HCT116 (cell line): ENCODE measurements at regions of chr5 and their contacts with region 1.

Region 1: DNA sequence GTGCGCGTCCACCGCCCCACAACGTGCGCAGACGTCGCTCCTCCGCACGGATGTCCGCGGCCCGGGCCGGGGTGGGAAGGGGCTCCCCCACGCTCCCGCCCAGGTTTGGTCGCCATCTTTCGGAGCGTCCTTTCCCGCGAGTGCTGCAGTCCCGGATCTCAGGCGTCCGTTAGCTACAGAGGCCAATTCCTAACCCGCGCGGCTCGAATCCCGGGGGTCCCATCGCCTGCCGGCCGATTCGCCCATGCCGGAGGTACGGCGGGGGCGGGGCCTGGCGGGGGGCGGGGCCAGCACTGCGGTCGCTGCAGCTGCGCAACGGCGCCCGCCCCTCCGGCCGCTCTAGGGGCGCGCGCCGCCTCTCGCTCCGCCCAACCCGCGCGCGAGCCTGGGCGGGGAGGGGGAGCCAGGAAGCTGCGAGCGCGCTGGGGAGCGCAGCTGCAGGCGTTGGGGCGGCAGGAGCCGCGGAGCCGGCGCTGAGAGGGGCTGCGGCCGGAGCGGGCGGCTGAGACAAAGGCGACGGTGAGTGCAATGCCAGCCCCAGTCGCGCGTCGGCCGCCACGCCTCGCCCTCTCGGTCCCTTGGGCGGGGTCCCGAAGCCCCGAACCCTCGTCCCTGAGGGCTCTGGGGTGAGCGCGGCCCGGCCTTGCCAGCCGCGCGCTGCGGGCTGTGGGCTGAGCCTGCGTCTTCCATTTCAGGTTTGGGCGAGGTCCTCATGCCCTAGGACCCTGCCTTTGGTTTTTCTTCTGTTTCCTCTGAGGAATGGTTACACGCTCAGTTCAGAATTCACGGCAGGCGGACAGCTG is at the start of gene CDC42SE2:
- DNase-seq: peak; percentile 49
- ATAC-seq: peak; percentile 94
- H3K4me3 ChIP-seq: peak within 1 kb of the TSS; percentile 83 to 86
- H3K27ac ChIP-seq: peak within 1 kb of the TSS; percentile 55
- H3K4me1 ChIP-seq: peaks cover 18 to 39% of the 10 kb centered on the region in 2 experiments
- H3K27me3 ChIP-seq: no peaks in the 10 kb centered on the region
- CTCF ChIP-seq: no peak
- POLR2A ChIP-seq: peak; percentile 83
- RAD21 ChIP-seq: no peak
- total RNA-seq, gene CDC42SE2: 27.0 TPM

Region 2: DNA sequence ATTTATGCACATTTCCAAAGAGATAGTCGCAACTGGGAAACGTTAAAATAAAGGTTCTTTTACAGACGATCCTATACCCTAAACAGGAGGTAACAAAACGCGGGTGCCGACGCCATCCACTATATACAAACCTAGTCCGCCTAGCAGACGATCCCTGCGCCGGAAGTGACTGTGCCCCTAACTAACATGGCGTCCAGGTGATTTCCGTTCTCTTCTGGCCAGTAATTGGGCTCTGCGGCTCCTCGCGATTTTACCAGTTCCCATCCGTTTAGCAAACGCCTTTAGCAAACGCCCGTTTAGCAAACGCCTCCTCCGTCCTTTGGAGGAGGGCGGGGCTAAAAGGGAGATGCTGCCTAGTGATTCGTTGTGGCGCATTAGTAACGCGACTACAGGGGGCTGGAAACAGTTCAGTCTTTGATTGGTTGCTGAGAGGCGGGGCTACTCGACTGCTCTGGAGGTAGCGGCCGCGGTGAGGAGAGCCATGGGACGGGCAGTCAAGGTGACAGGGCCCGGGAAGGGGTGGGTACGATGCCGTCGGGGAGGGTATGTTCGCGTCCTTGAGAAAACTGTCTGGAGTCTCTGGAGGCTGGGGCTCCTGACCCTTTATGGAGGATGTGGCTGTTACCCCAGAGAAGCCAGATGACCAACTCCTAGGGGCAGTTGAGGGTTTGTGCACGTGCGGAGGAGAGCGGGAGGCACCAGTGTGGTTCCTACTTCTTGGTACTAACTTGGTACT is 93.1 kb before region 1 on chr5 and contains the start of gene LYRM7:
- CTCF ChIA-PET with region 1: interaction called, 3 read pairs
- POLR2A ChIA-PET with region 1: no interaction called
- RAD21 ChIA-PET with region 1: no interaction called
- intact Hi-C with region 1: loop called (anchors 1 kb)
- DNase-seq: peak; percentile 99
- ATAC-seq: peak; percentile 96
- H3K4me3 ChIP-seq: peak within 1 kb of the TSS; percentile 59 to 73
- H3K27ac ChIP-seq: peak within 1 kb of the TSS; percentile 42; the same call in 1 of the 2 replicates
- H3K4me1 ChIP-seq: peaks cover 0 to 15% of the 10 kb centered on the region in 2 experiments; a peak in 2 of 4 replicates
- H3K27me3 ChIP-seq: no peaks in the 10 kb centered on the region
- CTCF ChIP-seq: no peak
- POLR2A ChIP-seq: peak; percentile 54
- RAD21 ChIP-seq: no peak
- total RNA-seq, gene LYRM7: 14.4 TPM

Region 3: DNA sequence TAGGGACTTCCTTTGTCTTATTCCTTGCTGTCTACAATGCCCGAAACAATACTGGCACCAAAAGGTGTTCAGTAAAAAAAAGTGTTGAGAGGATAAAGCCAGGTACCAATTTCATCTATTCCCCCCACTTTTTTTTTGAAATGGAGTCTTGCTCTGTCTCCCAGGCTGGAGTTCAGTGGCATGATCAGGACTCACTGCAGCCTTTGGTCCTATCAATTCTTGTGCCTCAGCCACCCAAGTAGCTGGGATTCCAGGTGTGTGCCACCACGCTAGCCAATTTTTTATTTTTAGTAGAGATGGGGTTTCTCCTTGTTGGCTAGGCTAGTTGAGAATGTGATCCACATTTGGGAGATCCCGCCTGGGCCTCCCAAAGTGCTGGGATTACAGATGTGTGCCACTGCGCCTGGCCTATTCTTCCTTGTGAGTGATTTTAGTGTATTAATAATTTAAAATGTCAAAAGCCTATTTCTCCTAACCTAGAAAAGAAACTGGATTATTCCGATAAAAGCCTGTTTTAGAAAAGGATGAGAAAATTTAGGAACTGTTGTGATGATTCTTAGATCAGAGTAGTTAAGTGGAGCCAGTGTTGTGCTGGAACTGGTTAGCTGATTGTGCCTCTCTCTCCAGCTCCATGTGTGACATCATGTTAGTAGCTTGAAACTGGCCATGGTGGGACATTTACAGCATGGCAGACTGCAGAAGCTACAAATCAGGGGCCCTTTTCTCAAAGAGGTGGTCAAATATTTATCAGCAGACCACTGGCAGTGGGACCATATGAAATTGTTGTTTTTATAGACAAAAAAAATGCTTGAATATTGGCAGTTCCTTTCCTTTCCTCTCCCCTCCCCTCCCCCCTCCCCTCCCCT is 14.3 kb after region 1 on chr5:
- CTCF ChIA-PET with region 1: interaction called, 4 read pairs
- POLR2A ChIA-PET with region 1: interaction called, 4 read pairs
- RAD21 ChIA-PET with region 1: no interaction called
- intact Hi-C with region 1: loop called (anchors 2 kb)
- DNase-seq: no peak
- ATAC-seq: peak; percentile 53; the same call in 1 of the 2 replicates
- H3K4me3 ChIP-seq: no peak overlapping the region
- H3K27ac ChIP-seq: peak overlapping the region; percentile 1; the same call in 1 of the 2 replicates
- H3K4me1 ChIP-seq: peaks cover 4 to 39% of the 10 kb centered on the region in 2 experiments
- H3K27me3 ChIP-seq: no peaks in the 10 kb centered on the region
- CTCF ChIP-seq: no peak
- POLR2A ChIP-seq: no peak
- RAD21 ChIP-seq: no peak

Region 4: DNA sequence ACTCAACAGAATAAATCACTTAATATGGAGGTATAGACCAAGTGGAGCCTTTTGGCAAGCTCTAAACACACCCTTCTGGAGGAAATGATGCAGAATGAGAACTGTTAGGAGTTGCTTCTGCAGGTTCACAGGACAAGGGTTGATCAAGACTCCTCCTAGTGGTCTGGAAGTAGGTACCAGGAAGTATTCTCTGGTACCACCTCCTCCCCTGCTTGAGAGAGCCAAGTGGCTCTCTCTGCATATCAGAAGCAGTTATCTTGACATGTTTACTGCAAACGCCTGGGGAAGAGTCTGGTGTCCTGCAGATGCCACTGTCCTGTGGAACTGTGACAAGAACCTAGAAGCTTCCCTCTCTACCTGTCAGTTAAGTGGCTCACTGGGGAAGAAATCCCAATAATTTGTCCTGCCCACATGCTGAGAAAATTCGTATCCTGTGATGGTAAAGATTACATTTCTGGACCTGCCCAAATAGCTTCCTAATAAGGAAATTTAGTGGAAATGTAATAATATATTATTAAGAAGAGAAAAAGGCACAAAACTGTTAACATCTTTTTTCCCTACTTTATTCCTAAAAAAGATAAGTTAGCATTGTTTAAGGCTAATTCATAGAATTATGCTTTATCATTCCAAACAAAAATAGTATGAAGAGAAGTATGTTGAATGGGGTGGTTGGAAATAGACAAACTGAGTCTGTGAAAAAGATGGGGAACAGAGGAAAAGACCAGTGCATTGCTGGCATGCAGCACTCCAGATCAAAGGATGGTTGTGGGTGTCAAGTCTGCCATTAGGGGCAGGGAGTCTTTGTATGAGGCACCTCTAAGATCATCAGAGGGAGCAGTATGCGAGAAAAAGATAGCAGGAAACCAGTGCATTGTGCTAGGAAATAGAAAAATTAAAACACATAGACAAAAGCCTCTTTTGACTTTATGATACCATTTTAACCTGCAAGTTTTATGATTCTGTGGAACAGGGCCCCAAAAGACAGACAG is 118.9 kb after region 1 on chr5:
- CTCF ChIA-PET with region 1: interaction called, 3 read pairs
- POLR2A ChIA-PET with region 1: no interaction called
- RAD21 ChIA-PET with region 1: interaction called in 1 of 2 experiments, 3 read pairs
- intact Hi-C with region 1: loop called (anchors 1 kb)
- DNase-seq: peak; percentile 50
- ATAC-seq: peak; percentile 97
- H3K4me3 ChIP-seq: no peak overlapping the region
- H3K27ac ChIP-seq: no peak overlapping the region
- H3K4me1 ChIP-seq: peaks cover 2 to 9% of the 10 kb centered on the region in 2 experiments; a peak in 2 of 4 replicates
- H3K27me3 ChIP-seq: no peaks in the 10 kb centered on the region
- CTCF ChIP-seq: peak; percentile 51 to 72 (median 67); a peak in 5 of 6 replicates
- POLR2A ChIP-seq: no peak
- RAD21 ChIP-seq: peak; percentile 83

Region 5: GRCh38 chr5:131550606-131551005 is 286.8 kb after region 1 on chr5:
- CTCF ChIA-PET with region 1: no interaction called
- POLR2A ChIA-PET with region 1: no interaction called
- RAD21 ChIA-PET with region 1: no interaction called
- intact Hi-C with region 1: no loop called
- DNase-seq: no peak
- ATAC-seq: no peak
- H3K4me3 ChIP-seq: no peak overlapping the region
- H3K27ac ChIP-seq: no peak overlapping the region
- H3K4me1 ChIP-seq: no peaks in the 10 kb centered on the region
- H3K27me3 ChIP-seq: no peaks in the 10 kb centered on the region
- CTCF ChIP-seq: no peak
- POLR2A ChIP-seq: no peak
- RAD21 ChIP-seq: no peak